Activated CD4-positive, alpha-beta memory T cell treated with anti-CD3 and anti-CD28 coated beads, Interleukin-2, amount 10 ng/mL, durations not matched to agents 7 days and 5 days (primary cell): ENCODE measurements at regions of chr21 and their contacts with region 1.

Region 1: DNA sequence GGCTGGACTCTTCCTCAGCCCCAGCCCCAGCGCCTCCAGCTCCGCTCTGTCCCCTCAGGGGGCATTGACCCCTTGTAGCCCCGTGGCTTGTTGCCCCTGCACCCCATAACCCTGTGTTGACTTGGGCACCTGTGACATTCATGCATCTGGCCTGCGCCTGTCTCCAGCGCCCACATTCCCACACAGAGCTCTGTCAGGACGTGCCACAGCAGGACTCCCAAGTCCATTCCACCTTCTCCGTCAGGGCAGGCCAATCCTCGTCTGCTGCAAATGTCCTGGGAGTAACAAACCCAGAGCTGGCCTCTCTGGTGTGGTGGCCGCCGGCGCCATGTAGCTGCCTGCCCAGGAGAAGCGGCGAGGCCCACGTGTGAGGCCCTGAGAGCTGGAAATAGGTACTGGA is 60.6 kb downstream of the AGPAT3 start:
- DNase-seq: no peak
- H3K4me3 Mint-ChIP-seq: no peak overlapping the region
- H3K27ac Mint-ChIP-seq: no peak overlapping the region
- H3K4me1 Mint-ChIP-seq: peaks cover 17% of the 10 kb centered on the region
- H3K27me3 Mint-ChIP-seq: no peaks in the 10 kb centered on the region

Region 2: GRCh38 chr21:43938751-43939442 is 13.3 kb after region 1 on chr21:
- CTCF ChIA-PET with region 1: interaction called, 10 read pairs
- POLR2A ChIA-PET with region 1: interaction called, 3 read pairs
- DNase-seq: peak; percentile 89
- H3K4me3 Mint-ChIP-seq: peak overlapping the region; percentile 77
- H3K27ac Mint-ChIP-seq: peak overlapping the region; percentile 48
- H3K4me1 Mint-ChIP-seq: peaks cover 17% of the 10 kb centered on the region
- H3K27me3 Mint-ChIP-seq: no peaks in the 10 kb centered on the region